ENCODE measurements at regions of chr2 and their contacts with region 1.

Region 1: GRCh38 chr2:46876741-46877384 is 38.7 kb downstream of the MCFD2 start:
- DNase-seq: peak; percentile 53 to 61
- ATAC-seq: peak; percentile 34 to 58 (median 42)
- H3K4me3 ChIP-seq: no peak overlapping the region
- H3K27ac ChIP-seq: peak overlapping the region in 8 of 10 donors; percentile 44 to 75 (median 56)
- H3K4me1 ChIP-seq: peaks cover 16 to 77% (median 49%) of the 10 kb centered on the region in 9 donors
- H3K27me3 ChIP-seq: no peaks in the 10 kb centered on the region
- CTCF ChIP-seq: peak; percentile 49 to 86 (median 65)

Region 2: GRCh38 chr2:46650556-46651001 is 226.3 kb before region 1 on chr2:
- intact Hi-C with region 1: loop called in 4 of 10 experiments (anchors 5 kb)
- DNase-seq: peak in 1 of 2 donors; percentile 79
- ATAC-seq: peak in 7 of 8 donors; percentile 56 to 83 (median 66)
- H3K4me3 ChIP-seq: no peak overlapping the region
- H3K27ac ChIP-seq: no peak overlapping the region
- H3K4me1 ChIP-seq: peaks cover 0 to 12% (median 5%) of the 10 kb centered on the region in 9 donors
- H3K27me3 ChIP-seq: no peaks in the 10 kb centered on the region
- CTCF ChIP-seq: peak; percentile 93 to 100 (median 96)

Region 3: DNA sequence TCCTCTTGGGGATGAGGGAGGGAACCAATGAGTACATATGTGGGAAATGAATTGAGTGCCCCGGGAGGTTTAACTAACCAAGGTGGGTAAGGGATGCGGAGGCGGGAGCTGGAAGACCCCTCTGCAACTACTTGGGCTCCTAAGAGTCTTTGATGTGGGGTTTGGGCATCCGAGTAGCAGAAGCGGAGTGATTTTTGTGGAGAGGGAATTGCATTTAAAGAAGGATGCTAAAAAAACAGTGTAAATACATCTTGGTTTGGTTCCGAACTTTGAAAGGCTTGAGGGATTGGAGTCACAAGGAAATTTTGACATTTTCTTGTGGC is 177.0 kb before region 1 on chr2:
- intact Hi-C with region 1: loop called in 1 of 10 experiments (anchors 5 kb)
- DNase-seq: no peak
- ATAC-seq: no peak
- H3K4me3 ChIP-seq: peak overlapping the region; percentile 69 to 94 (median 79)
- H3K27ac ChIP-seq: peak overlapping the region; percentile 92 to 99 (median 95)
- H3K4me1 ChIP-seq: peaks cover 2 to 58% (median 47%) of the 10 kb centered on the region in 9 donors
- H3K27me3 ChIP-seq: no peaks in the 10 kb centered on the region
- CTCF ChIP-seq: no peak

Region 4: GRCh38 chr2:46812361-46813024 is 64.4 kb before region 1 on chr2:
- intact Hi-C with region 1: loop called in 4 of 10 experiments (anchors 2 to 10 kb)
- DNase-seq: peak; percentile 69 to 78
- ATAC-seq: peak; percentile 11 to 47 (median 38)
- H3K4me3 ChIP-seq: peak overlapping the region in 1 of 10 donors; percentile 5
- H3K27ac ChIP-seq: peak overlapping the region; percentile 57 to 93 (median 90)
- H3K4me1 ChIP-seq: peaks cover 36 to 63% (median 51%) of the 10 kb centered on the region in 9 donors
- H3K27me3 ChIP-seq: no peaks in the 10 kb centered on the region
- CTCF ChIP-seq: no peak

Region 5: GRCh38 chr2:46847235-46848068 is 29.4 kb before region 1 on chr2:
- intact Hi-C with region 1: loop called in 1 of 10 experiments (anchors 2 kb)
- DNase-seq: peak; percentile 91 to 96
- ATAC-seq: peak; percentile 70 to 92 (median 88)
- H3K4me3 ChIP-seq: no peak overlapping the region
- H3K27ac ChIP-seq: peak overlapping the region; percentile 85 to 96 (median 92)
- H3K4me1 ChIP-seq: peaks cover 44 to 71% (median 65%) of the 10 kb centered on the region in 9 donors
- H3K27me3 ChIP-seq: no peaks in the 10 kb centered on the region
- CTCF ChIP-seq: peak in 3 of 9 donors; percentile 21 to 41 (median 29)

Region 6: GRCh38 chr2:46857893-46858701 is 18.8 kb before region 1 on chr2:
- intact Hi-C with region 1: no loop called
- DNase-seq: no peak
- ATAC-seq: no peak
- H3K4me3 ChIP-seq: no peak overlapping the region
- H3K27ac ChIP-seq: peak overlapping the region in 2 of 10 donors; percentile 26 to 84
- H3K4me1 ChIP-seq: peaks cover 9 to 46% (median 25%) of the 10 kb centered on the region in 9 donors
- H3K27me3 ChIP-seq: no peaks in the 10 kb centered on the region
- CTCF ChIP-seq: no peak

Region 7: GRCh38 chr2:46967990-46968647 is 91.3 kb after region 1 on chr2:
- intact Hi-C with region 1: no loop called
- DNase-seq: peak; percentile 56 to 61
- ATAC-seq: peak; percentile 41 to 85 (median 74)
- H3K4me3 ChIP-seq: no peak overlapping the region
- H3K27ac ChIP-seq: peak overlapping the region in 9 of 10 donors; percentile 14 to 77 (median 53)
- H3K4me1 ChIP-seq: peaks cover 5 to 60% (median 17%) of the 10 kb centered on the region in 9 donors
- H3K27me3 ChIP-seq: no peaks in the 10 kb centered on the region
- CTCF ChIP-seq: no peak